ENCODE measurements at regions of chr13 and their contacts with region 1.

Region 1: GRCh38 chr13:42474954-42475353 is 99.0 kb upstream of the TNFSF11 start:
- DNase-seq: no peak

Region 2: GRCh38 chr13:41159174-41159573 is 1315.8 kb before region 1 on chr13:
- CTCF ChIA-PET with region 1: interaction called, 11 read pairs
- POLR2A ChIA-PET with region 1: no interaction called
- DNase-seq: no peak

Region 3: GRCh38 chr13:42354241-42355091 is 120.5 kb before region 1 on chr13:
- CTCF ChIA-PET with region 1: no interaction called
- POLR2A ChIA-PET with region 1: no interaction called
- DNase-seq: no peak

Measured in HEK293T (cell line).